WTC11 (cell line): ENCODE measurements at regions of chr6 and their contacts with region 1.

Region 1: GRCh38 chr6:6547110-6547879 is 41.2 kb upstream of the LY86 start:
- DNase-seq: peak; percentile 94
- ATAC-seq: peak; percentile 90
- H3K4me3 Mint-ChIP-seq: peak overlapping the region; percentile 75
- H3K27ac Mint-ChIP-seq: peak overlapping the region; percentile 67
- H3K4me1 Mint-ChIP-seq: peaks cover 19% of the 10 kb centered on the region
- H3K27me3 Mint-ChIP-seq: peaks cover 28% of the 10 kb centered on the region
- CTCF ChIP-seq: peak; percentile 96

Region 2: DNA sequence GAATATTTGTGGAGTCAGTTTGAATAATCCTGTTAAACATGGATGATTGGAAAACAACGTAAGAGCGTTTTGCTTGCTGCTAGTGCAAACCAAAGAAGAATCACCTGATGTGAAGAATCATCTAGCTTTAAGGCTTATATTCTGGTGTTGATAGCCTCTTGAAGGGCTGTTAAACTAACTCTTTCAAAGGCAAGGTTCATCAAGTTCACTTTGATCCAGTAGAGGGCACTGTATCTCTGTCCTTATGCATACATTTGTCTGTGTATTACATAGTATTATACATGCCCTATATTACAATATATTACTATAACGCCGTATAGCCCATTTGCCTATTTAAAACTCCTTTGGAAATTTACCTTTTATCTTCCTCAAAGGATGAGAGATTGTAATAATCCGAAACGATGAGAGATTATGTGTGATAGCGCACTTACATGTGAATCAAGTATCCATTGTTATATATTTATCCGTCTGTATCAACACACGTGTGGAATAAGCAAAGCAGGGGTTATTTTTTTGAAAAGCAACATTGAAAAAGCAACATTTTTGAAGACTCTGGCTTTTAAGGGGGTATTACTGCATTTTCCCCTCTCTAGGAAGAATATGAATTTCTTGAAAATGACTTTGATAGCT is 489.8 kb before region 1 on chr6:
- CTCF ChIA-PET with region 1: interaction called, 23 read pairs
- POLR2A ChIA-PET with region 1: no interaction called
- DNase-seq: no peak
- ATAC-seq: peak; percentile 82
- H3K4me3 Mint-ChIP-seq: no peak overlapping the region
- H3K27ac Mint-ChIP-seq: no peak overlapping the region
- H3K4me1 Mint-ChIP-seq: no peaks in the 10 kb centered on the region
- H3K27me3 Mint-ChIP-seq: no peaks in the 10 kb centered on the region; the same call in 1 of the 2 replicates
- CTCF ChIP-seq: peak; percentile 29; the same call in 1 of the 2 replicates

Region 3: DNA sequence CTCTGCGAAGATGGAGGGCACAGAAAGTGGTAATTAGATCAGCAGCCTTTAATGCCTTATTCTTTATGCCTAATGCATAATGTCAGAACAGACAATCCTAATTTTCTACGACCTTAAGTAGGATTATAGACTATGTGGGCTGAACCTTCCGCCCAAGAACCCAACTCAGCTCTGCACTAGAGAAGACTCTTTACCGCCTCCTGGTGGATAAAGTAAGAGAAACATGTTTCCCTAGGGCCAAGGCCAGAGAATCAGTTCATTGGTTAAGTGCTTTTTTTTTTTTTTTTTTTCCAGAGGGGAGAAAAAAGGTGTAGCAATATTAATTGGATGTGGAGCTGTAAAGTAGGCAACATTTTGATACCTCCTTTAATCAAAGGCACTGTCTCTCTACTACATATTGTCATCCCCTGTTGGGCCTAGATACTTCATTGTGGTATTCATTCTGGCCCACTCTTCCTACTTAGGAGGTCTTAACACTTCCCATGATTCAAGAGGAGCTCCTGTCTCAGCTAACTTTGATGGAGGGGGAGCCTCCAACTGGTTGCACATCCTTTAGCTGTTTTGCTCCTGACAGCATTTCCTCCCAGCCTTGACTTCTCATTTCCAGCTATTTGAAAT is 415.7 kb before region 1 on chr6:
- CTCF ChIA-PET with region 1: interaction called, 10 read pairs
- POLR2A ChIA-PET with region 1: no interaction called
- DNase-seq: peak; percentile 36
- ATAC-seq: peak; percentile 95
- H3K4me3 Mint-ChIP-seq: no peak overlapping the region
- H3K27ac Mint-ChIP-seq: no peak overlapping the region
- H3K4me1 Mint-ChIP-seq: 0 out of 2 replicates have a peak, but pooled peaks cover 2% of the 10 kb centered on the region
- H3K27me3 Mint-ChIP-seq: peaks cover 6% of the 10 kb centered on the region
- CTCF ChIP-seq: peak; percentile 61

Region 4: DNA sequence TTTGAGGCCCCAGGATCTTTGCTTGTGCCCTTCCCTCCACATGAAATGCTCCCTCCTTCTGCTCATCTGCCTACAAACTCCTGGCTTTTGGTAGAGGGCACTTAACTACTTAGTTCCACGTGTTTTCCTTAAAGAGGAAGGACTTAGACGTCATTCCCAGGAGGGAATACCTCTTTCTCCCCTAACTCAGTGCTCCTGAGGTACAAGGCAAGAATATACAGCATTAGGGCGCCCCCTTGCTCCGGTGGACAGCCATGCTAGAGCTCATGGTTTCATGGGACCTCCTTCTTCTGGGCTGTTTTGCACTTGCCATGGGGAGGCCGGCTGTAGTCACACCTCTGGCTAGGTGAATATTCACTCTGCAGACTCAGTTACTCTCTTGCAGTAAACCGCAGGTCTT is 52.6 kb before region 1 on chr6:
- CTCF ChIA-PET with region 1: interaction called, 25 read pairs
- POLR2A ChIA-PET with region 1: interaction called, 3 read pairs
- DNase-seq: peak; percentile 85
- ATAC-seq: peak; percentile 99
- H3K4me3 Mint-ChIP-seq: no peak overlapping the region
- H3K27ac Mint-ChIP-seq: no peak overlapping the region
- H3K4me1 Mint-ChIP-seq: no peaks in the 10 kb centered on the region
- H3K27me3 Mint-ChIP-seq: no peaks in the 10 kb centered on the region; the same call in none of the 2 replicates
- CTCF ChIP-seq: peak; percentile 65

Region 5: DNA sequence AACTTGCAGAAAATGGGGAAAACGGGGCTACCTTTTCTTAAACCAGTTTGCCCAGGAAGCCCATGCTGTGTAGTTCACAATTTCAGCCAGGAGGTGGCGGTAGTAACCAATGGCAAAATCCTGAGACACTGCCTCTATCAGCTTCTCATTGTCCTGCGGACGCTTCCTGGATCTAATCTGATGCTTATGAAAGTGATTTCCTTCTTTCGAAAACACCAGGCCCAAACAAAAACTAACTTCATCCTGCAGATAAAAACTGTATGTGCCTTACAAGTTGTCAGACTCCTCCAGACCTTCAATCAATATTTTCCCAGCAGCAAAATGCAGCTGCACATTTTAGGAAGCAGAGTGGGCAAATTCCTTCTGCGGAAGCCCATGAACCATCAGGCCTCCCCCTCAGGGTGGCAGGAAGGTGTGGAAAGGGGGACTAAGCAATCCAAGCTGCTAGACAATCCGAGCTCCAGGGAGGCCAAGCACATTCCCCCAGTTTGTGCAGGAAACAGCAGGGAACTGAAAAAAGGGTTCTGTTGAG is 129.7 kb after region 1 on chr6:
- CTCF ChIA-PET with region 1: no interaction called
- POLR2A ChIA-PET with region 1: no interaction called
- DNase-seq: peak; percentile 86
- ATAC-seq: peak; percentile 69
- H3K4me3 Mint-ChIP-seq: 0 out of 2 replicates have a peak overlapping the region, but pooled peaks have one; percentile 16
- H3K27ac Mint-ChIP-seq: peak overlapping the region; percentile 39
- H3K4me1 Mint-ChIP-seq: peaks cover 29% of the 10 kb centered on the region
- H3K27me3 Mint-ChIP-seq: no peaks in the 10 kb centered on the region
- CTCF ChIP-seq: peak; percentile 95